ENCODE measurements at regions of chr12 and their contacts with region 1.

Region 1: DNA sequence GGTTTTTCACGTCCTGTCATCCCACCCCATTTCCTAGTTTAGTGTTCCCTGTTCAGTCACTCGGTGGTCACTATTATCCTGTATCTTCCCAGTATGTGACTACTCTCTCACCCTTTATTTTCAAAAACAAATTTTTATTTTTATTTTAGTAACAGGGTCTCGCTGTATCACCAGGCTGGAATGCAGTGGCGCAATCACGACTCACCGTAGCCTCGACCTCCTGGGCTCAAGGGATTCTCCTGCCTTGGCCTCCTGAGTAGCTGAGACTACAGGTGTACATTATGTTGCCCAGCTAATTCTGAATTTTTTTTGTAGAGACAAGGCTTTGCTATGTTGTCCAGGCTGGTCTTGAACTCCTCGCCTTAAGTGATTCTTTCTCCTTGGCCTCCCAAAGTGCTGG is 20.1 kb upstream of the PRICKLE1 start:
- DNase-seq: peak in 1 of 2 donors; percentile 15
- ATAC-seq: no peak
- H3K4me3 ChIP-seq: no peak overlapping the region
- H3K27ac ChIP-seq: no peak overlapping the region
- H3K4me1 ChIP-seq: no peaks in the 10 kb centered on the region
- H3K27me3 ChIP-seq: no peaks in the 10 kb centered on the region
- CTCF ChIP-seq: no peak

Region 2: GRCh38 chr12:41739066-41739465 is 870.5 kb before region 1 on chr12:
- intact Hi-C with region 1: loop called in 1 of 2 experiments (anchors 5 kb)
- DNase-seq: no peak
- ATAC-seq: no peak
- H3K4me3 ChIP-seq: no peak overlapping the region
- H3K27ac ChIP-seq: no peak overlapping the region
- H3K4me1 ChIP-seq: no peaks in the 10 kb centered on the region
- H3K27me3 ChIP-seq: no peaks in the 10 kb centered on the region
- CTCF ChIP-seq: no peak

Region 3: DNA sequence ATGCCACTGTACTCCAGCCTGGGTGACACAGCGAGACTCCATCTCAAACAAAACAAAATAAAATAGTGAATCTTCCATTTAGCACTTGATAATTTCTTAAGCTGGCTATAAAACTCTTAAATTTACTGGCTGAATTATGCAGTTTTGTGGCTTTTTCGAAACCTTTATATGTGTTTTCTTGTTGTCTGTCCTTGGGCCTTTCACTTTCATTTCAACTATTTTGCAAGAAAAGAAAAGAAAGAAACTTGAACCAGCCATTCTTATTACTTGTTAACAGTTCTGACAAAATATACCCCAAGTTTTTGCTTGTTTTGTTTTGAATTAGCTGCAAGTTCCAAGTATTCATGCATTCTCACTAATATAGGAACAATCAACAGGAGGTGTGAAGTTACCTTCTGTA is 62.9 kb before region 1 on chr12:
- intact Hi-C with region 1: no loop called
- DNase-seq: no peak
- ATAC-seq: no peak
- H3K4me3 ChIP-seq: no peak overlapping the region
- H3K27ac ChIP-seq: no peak overlapping the region
- H3K4me1 ChIP-seq: no peaks in the 10 kb centered on the region
- H3K27me3 ChIP-seq: no peaks in the 10 kb centered on the region
- CTCF ChIP-seq: no peak